Thyroid gland (tissue), 4 donors: ENCODE measurements at regions of chr18 and their contacts with region 1.

Region 1: GRCh38 chr18:70205421-70206397 is at the start of gene RTTN:
- DNase-seq: peak; percentile 91 to 94
- H3K4me3 ChIP-seq: peak within 1 kb of the TSS; percentile 51 to 77 (median 68)
- H3K27ac ChIP-seq: peak within 1 kb of the TSS; percentile 95 to 98 (median 98)
- H3K4me1 ChIP-seq: peaks cover 5 to 6% of the 10 kb centered on the region in 2 donors
- H3K27me3 ChIP-seq: no peaks in the 10 kb centered on the region
- CTCF ChIP-seq: no peak
- POLR2A ChIP-seq: peak in 1 of 2 donors; percentile 29
- total RNA-seq, gene RTTN: 12.6 to 34.6 (median 19.3) TPM

Region 2: DNA sequence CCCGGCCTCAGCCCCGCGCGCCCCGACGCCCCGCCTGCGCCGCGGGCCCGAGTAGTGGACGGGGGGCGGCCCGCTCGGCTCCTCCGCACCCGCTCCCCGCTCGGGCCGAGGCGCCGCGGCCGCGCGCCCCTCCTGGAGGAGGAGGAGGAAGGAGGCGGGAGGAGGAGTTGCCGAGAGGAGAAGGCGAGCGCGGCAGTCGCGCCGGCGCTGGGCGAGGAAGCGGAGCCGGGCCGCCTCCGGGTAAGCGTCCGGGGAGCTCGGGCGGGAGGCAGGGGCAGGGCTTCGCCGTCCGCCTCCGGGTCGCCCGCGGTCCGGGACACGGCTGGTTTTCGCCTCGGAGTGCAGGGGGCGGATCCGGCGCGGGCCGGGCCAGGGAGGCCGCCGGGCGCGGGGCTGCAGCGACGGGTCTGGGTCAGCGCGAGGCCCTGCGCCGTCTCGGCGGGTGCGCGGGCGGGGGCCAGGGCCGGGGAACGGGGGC is 83.2 kb after region 1 on chr18 and contains the start of gene SOCS6:
- intact Hi-C with region 1: loop called (anchors 5 kb)
- DNase-seq: peak; percentile 67 to 70
- H3K4me3 ChIP-seq: peak within 1 kb of the TSS; percentile 62 to 71 (median 68)
- H3K27ac ChIP-seq: peak within 1 kb of the TSS; percentile 73 to 86 (median 85)
- H3K4me1 ChIP-seq: peaks cover 17 to 32% of the 10 kb centered on the region in 2 donors
- H3K27me3 ChIP-seq: no peaks in the 10 kb centered on the region
- CTCF ChIP-seq: no peak
- POLR2A ChIP-seq: peak in 1 of 2 donors; percentile 66
- total RNA-seq, gene SOCS6: 20.7 to 25.6 (median 23.6) TPM